ENCODE measurements at regions of chr11 and their contacts with region 1.

Region 1: GRCh38 chr11:129639300-129639699 is 176.3 kb upstream of the TMEM45B start:
- DNase-seq: peak; percentile 66
- H3K4me3 Mint-ChIP-seq: no peak overlapping the region
- H3K27ac Mint-ChIP-seq: peak overlapping the region; percentile 70
- H3K4me1 Mint-ChIP-seq: peaks cover 70% of the 10 kb centered on the region
- H3K27me3 Mint-ChIP-seq: no peaks in the 10 kb centered on the region

Region 2: DNA sequence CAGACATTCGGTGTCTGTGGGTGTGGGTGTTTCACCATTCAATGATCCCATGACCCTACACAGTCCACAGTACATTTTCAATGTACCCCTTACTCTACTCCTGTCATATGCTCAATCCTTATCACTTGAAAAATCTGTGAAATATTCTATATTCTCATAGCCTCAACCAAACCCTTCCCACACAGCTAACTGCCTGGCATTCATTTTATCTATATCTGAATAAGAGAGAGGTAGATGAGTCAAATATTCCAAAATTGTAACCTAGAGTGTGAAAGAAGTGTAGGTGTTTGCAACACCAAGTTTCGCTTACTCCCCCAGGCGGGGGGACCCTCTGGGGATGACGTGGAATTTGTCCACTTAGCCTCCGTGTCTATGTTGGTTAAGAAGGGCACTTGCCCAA is 1406.7 kb before region 1 on chr11:
- CTCF ChIA-PET with region 1: no interaction called
- POLR2A ChIA-PET with region 1: no interaction called
- intact Hi-C with region 1: loop called (anchors 5 kb)
- DNase-seq: peak; percentile 85
- H3K4me3 Mint-ChIP-seq: no peak overlapping the region
- H3K27ac Mint-ChIP-seq: peak overlapping the region; percentile 69
- H3K4me1 Mint-ChIP-seq: peaks cover 52% of the 10 kb centered on the region
- H3K27me3 Mint-ChIP-seq: no peaks in the 10 kb centered on the region

Region 3: DNA sequence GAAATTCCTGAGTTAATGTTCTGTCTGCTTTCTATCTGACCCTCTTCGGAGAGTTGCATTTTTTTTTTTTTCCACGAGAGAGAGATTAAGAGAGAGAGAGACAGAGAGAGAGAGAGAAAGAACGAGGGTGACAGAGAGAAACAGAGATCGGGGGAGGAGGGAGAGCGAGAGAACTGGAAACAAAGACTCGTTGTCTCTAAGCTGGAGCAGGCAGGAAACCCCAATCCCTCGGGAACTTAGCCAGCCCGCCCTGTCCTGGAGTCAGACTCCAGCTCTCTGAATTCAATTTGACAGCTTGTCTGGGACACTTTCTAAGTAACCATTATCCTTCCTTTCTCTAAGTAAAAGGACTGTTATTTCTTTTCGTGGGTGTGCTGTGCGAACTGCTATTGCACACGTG is 849.1 kb before region 1 on chr11:
- CTCF ChIA-PET with region 1: no interaction called
- POLR2A ChIA-PET with region 1: no interaction called
- intact Hi-C with region 1: no loop called
- DNase-seq: no peak
- H3K4me3 Mint-ChIP-seq: no peak overlapping the region
- H3K27ac Mint-ChIP-seq: no peak overlapping the region
- H3K4me1 Mint-ChIP-seq: peaks cover 2% of the 10 kb centered on the region
- H3K27me3 Mint-ChIP-seq: no peaks in the 10 kb centered on the region

Region 4: DNA sequence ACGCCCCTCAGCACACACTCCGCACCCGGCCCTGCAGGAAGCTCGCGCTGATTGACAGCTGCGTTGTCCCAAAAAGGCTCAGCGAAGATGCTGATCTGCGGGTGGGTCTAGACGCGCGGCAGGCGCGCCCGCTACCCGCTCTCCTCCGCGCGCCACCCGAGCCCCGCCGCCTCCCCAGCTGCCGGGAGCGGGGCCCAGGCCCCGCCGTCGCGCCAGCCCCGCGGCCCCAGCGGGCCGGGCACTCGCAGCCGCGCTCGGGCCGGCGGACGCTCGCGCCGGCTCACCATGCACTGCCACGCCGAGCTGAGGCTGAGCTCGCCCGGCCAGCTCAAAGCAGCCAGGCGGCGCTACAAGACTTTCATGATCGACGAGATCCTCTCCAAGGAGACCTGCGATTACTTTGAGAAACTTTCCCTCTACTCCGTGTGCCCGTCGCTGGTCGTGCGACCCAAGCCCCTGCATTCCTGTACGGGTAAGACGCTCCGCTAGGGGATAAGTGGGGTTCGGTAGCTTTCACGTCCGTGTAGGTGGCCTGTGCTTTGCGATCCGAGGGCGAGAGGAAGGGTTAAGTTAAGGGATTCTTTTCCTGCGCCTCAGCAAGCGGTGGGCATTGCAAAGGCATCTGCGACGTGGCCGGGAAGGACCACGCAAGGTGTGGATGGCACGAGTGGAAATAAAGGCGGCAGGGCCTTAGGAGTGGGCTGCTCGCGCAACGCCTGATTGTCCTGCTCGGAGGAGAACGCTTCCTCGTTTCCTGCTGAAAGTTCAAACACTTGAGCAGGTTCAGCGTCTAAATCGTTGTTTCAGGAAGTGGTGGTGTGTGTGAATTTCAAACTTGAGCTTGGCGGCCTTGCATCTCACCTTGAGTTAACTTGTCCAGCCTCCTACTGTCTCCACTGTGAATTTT is 263.3 kb before region 1 on chr11 and contains the start of gene BARX2:
- CTCF ChIA-PET with region 1: interaction called, 3 read pairs
- POLR2A ChIA-PET with region 1: no interaction called
- intact Hi-C with region 1: loop called (anchors 5 kb)
- DNase-seq: peak; percentile 64
- H3K4me3 Mint-ChIP-seq: peak within 1 kb of the TSS; percentile 62
- H3K27ac Mint-ChIP-seq: no peak within 1 kb of the TSS
- H3K4me1 Mint-ChIP-seq: peaks cover 26% of the 10 kb centered on the region
- H3K27me3 Mint-ChIP-seq: peaks cover 68% of the 10 kb centered on the region
- total RNA-seq, gene BARX2: 0.29 to 0.71 TPM

Region 5: DNA sequence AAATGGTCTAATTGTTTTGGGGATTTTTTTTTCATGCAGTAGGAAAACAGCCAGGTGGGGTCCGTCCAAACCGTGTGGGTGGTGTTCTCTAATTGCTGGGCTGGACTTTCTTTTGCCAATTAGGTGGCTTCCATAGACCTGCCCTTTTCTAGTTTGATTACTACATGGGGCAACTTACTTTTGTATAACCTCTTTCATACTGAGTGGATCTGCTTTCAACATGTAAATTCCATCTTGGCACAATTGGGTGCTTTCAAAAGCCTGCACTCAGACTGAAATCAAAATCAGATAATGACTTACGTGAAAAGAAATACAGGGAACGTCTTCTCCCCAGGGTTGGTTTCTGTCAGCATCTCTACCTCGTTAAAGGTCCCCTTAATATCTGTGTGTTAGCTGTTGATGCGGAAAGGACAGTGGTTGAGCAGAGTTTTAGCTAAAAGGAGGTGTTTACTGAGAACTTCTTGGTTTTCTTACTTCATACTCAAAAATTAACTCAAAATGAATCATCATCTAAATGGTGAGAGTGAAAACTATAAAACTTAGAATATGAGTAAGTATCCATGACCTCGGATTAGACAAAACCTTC is 191.6 kb before region 1 on chr11:
- CTCF ChIA-PET with region 1: no interaction called
- POLR2A ChIA-PET with region 1: no interaction called
- intact Hi-C with region 1: loop called (anchors 5 kb)
- DNase-seq: no peak
- H3K4me3 Mint-ChIP-seq: no peak overlapping the region
- H3K27ac Mint-ChIP-seq: no peak overlapping the region
- H3K4me1 Mint-ChIP-seq: peaks cover 8% of the 10 kb centered on the region
- H3K27me3 Mint-ChIP-seq: peaks cover 8% of the 10 kb centered on the region

Region 6: GRCh38 chr11:129803533-129803932 is 164.2 kb after region 1 on chr11:
- CTCF ChIA-PET with region 1: no interaction called
- POLR2A ChIA-PET with region 1: no interaction called
- intact Hi-C with region 1: loop called (anchors 10 kb)
- DNase-seq: no peak
- H3K4me3 Mint-ChIP-seq: no peak overlapping the region
- H3K27ac Mint-ChIP-seq: peak overlapping the region; percentile 57
- H3K4me1 Mint-ChIP-seq: peaks cover 63% of the 10 kb centered on the region
- H3K27me3 Mint-ChIP-seq: no peaks in the 10 kb centered on the region

Measured in activated CD4-positive, alpha-beta memory T cell treated with anti-CD3 and anti-CD28 coated beads for 36 hours (primary cell).